Panc1 (cell line): ENCODE measurements at regions of chr12 and their contacts with region 1.

Region 1: GRCh38 chr12:12881151-12881894 is 10.0 kb upstream of the GPRC5A start:
- DNase-seq: no peak
- ATAC-seq: peak; percentile 14; the same call in 1 of the 2 replicates
- H3K4me3 ChIP-seq: no peak overlapping the region
- H3K27ac ChIP-seq: peak overlapping the region; percentile 97
- H3K4me1 ChIP-seq: peaks cover 76% of the 10 kb centered on the region
- H3K27me3 ChIP-seq: no peaks in the 10 kb centered on the region
- CTCF ChIP-seq: no peak

Region 2: DNA sequence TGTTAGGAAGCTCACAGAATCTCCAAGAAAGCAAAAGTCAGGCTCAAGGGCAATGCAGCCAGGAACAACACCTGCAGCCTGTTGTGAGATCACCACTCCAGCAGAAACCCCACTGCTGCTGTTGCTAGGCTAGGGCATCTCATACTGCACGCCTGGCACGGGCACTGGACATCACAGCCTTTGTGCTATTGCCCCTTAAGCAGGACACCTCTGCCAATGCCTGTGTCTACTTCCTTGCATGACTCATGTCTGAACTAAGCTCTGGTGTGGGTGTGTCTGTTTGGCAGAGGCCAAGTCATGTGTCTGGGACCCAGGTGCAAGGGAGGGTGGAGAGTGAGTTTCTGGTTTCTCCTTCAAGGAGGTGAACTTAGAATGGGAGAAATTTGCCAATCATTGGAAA is 78.1 kb before region 1 on chr12:
- CTCF ChIA-PET with region 1: no interaction called
- POLR2A ChIA-PET with region 1: interaction called, 16 read pairs
- in situ Hi-C with region 1: no loop called
- intact Hi-C with region 1: no loop called
- DNase-seq: no peak
- ATAC-seq: peak; percentile 91
- H3K4me3 ChIP-seq: no peak overlapping the region
- H3K27ac ChIP-seq: peak overlapping the region; percentile 75
- H3K4me1 ChIP-seq: peaks cover 31% of the 10 kb centered on the region
- H3K27me3 ChIP-seq: no peaks in the 10 kb centered on the region
- CTCF ChIP-seq: no peak